GM12878 (cell line): ENCODE measurements at regions of chrX and their contacts with region 1.

Region 1: DNA sequence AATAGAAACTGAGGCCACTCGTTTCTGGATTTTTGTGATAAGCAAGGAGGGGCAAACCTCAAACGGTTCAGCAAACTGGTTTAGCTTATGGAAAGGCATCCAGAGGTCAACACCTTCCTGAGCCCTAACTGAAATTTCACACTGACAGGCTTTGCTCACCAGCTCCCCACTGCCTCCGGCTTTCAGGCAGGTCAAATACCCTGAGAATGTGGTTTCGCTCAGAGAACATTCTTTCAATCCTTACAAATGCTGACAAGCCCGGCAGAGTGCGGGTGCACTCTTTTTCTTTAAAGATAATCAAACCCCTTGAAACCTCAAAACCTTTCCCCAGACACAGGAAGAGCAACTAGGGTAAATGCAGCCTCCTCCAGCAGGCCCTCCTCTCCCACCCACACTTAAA is 41.5 kb downstream of the CD40LG start:
- DNase-seq: no peak
- ATAC-seq: peak; percentile 35
- H3K4me3 ChIP-seq: no peak overlapping the region
- H3K27ac ChIP-seq: peak overlapping the region; percentile 53
- H3K4me1 ChIP-seq: peaks cover 30% of the 10 kb centered on the region
- H3K27me3 ChIP-seq: no peaks in the 10 kb centered on the region; a peak in 1 of 4 replicates
- CTCF ChIP-seq: no peak
- EP300 ChIP-seq: no peak
- POLR2A ChIP-seq: no peak
- RAD21 ChIP-seq: no peak

Region 2: GRCh38 chrX:136608295-136609171 is 80.9 kb before region 1 on chrX:
- CTCF ChIA-PET with region 1: interaction called, 104 read pairs
- POLR2A ChIA-PET with region 1: interaction called, 4 read pairs
- RAD21 ChIA-PET with region 1: interaction called, 73 read pairs
- SMC1A ChIA-PET with region 1: interaction called, 100 read pairs
- in situ Hi-C with region 1: no loop called
- intact Hi-C with region 1: loop called (anchors 1 kb)
- DNase-seq: no peak
- ATAC-seq: peak; percentile 80
- H3K4me3 ChIP-seq: no peak overlapping the region
- H3K27ac ChIP-seq: no peak overlapping the region
- H3K4me1 ChIP-seq: no peaks in the 10 kb centered on the region
- H3K27me3 ChIP-seq: no peaks in the 10 kb centered on the region
- CTCF ChIP-seq: peak; percentile 14 to 37 (median 29); a peak in 4 of 6 replicates
- EP300 ChIP-seq: no peak
- POLR2A ChIP-seq: no peak
- RAD21 ChIP-seq: peak; percentile 64

Region 3: DNA sequence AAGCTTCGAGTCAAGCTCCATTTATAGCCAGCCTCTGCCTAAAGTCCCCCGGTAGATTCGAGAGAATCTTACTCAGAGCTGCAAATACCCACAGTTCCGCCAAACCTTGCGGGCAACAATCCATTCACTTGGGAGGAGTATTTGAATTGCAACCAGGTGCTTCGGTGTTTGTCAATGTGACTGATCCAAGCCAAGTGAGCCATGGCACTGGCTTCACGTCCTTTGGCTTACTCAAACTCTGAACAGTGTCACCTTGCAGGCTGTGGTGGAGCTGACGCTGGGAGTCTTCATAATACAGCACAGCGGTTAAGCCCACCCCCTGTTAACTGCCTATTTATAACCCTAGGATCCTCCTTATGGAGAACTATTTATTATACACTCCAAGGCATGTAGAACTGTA is 30.3 kb before region 1 on chrX:
- CTCF ChIA-PET with region 1: no interaction called
- POLR2A ChIA-PET with region 1: no interaction called
- RAD21 ChIA-PET with region 1: no interaction called
- SMC1A ChIA-PET with region 1: no interaction called
- in situ Hi-C with region 1: no loop called
- intact Hi-C with region 1: no loop called
- DNase-seq: no peak
- ATAC-seq: no peak
- H3K4me3 ChIP-seq: no peak overlapping the region
- H3K27ac ChIP-seq: no peak overlapping the region
- H3K4me1 ChIP-seq: peaks cover 10% of the 10 kb centered on the region; the same call in 1 of the 2 replicates
- H3K27me3 ChIP-seq: no peaks in the 10 kb centered on the region
- CTCF ChIP-seq: no peak
- EP300 ChIP-seq: no peak
- POLR2A ChIP-seq: no peak
- RAD21 ChIP-seq: no peak

Region 4: DNA sequence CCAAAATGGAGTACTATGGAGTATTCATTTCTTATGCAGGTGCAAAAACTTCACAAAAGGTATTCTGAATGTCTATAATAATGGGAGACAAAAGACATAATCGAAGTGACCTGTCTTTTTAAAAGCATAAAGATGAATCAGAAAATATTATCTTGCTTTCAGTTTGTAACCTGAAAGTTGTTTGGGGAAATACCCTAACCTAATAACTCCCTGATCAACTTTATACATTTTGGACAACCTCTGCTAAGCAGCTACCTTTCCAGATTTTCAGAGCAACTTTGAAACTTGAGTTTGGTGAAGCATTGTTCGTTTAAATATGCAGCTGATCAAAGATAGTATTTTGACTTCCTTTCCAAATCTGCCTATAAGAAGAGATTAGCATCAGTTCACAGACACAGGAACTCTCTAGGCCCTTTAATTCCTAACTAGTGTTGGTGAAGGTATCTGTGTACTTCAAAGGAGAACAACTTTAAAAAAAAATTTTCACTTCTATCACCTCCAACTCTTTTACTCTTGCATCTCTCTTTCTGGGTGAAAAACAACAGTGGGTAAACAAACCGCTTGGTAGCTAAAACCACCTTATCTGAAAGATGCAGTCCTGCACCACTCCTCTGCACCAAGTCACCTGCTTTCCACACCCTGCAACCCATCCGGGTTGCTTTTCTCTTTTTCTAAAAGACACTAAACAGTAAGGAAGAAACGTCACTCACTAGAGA is 15.0 kb before region 1 on chrX:
- CTCF ChIA-PET with region 1: interaction called, 4 read pairs
- POLR2A ChIA-PET with region 1: interaction called, 4 read pairs
- RAD21 ChIA-PET with region 1: interaction called, 10 read pairs
- SMC1A ChIA-PET with region 1: interaction called, 11 read pairs
- in situ Hi-C with region 1: no loop called
- intact Hi-C with region 1: no loop called
- DNase-seq: no peak
- ATAC-seq: peak; percentile 56
- H3K4me3 ChIP-seq: peak overlapping the region; percentile 14; the same call in 1 of the 2 replicates
- H3K27ac ChIP-seq: peak overlapping the region; percentile 60
- H3K4me1 ChIP-seq: peaks cover 43% of the 10 kb centered on the region
- H3K27me3 ChIP-seq: no peaks in the 10 kb centered on the region
- CTCF ChIP-seq: no peak
- EP300 ChIP-seq: no peak
- POLR2A ChIP-seq: no peak
- RAD21 ChIP-seq: no peak